Activated T-helper 1 cell treated with anti-CD3 and anti-CD28 coated beads, Interleukin-12 subunit alpha, Interleukin-12 subunit beta, Interleukin-2, Interleukin-4 antibody, amounts not matched to agents 30 ng/mL and 10 ng/mL and 1 ng/mL, durations not matched to agents 14 hours and 24 hours and 36 hours (primary cell): ENCODE measurements at regions of chr14 and their contacts with region 1.

Region 1: DNA sequence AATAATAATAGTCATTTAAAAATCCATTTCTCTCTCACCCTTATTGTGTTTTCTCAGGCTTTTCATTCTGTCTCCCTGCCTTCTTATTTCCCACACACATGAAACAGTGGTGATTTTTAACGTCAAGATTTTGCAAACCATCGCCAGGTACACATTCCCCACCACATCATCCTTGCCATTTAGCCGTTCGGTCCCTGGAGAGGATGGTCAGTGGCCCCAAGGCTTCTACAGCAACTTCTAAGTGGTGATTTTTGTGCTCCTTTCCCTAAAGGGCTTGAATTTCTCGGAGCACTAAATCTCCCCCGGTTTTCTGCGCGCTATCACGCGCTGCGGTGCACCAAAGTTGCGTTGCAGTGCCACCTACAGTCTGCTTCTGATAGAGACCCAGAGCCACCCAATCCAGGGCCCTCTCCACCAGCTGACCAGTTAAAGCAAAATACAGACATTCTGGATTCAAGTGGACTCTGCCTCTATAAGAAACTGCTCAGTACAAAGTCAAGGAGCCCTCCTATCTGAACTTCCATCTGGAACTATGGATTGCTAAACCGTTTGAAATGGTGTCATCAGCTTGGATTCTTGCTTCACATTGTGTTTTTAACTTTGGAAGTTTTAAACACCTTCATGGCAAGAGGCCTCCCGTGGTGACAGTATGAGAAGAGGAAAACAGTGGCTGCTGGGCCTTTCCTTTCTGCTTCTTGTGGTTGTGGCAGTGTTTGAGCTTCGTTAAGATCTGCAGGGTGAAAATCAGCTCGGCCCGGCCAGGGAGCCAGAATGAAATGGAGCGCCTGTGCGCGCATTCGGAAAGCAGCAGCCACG is 234.0 kb downstream of the SPTSSA start:
- DNase-seq: peak; percentile 45
- H3K4me3 Mint-ChIP-seq: peak overlapping the region; percentile 40
- H3K27ac Mint-ChIP-seq: no peak overlapping the region
- H3K4me1 Mint-ChIP-seq: peaks cover 16% of the 10 kb centered on the region
- H3K27me3 Mint-ChIP-seq: peaks cover 16% of the 10 kb centered on the region

Region 2: DNA sequence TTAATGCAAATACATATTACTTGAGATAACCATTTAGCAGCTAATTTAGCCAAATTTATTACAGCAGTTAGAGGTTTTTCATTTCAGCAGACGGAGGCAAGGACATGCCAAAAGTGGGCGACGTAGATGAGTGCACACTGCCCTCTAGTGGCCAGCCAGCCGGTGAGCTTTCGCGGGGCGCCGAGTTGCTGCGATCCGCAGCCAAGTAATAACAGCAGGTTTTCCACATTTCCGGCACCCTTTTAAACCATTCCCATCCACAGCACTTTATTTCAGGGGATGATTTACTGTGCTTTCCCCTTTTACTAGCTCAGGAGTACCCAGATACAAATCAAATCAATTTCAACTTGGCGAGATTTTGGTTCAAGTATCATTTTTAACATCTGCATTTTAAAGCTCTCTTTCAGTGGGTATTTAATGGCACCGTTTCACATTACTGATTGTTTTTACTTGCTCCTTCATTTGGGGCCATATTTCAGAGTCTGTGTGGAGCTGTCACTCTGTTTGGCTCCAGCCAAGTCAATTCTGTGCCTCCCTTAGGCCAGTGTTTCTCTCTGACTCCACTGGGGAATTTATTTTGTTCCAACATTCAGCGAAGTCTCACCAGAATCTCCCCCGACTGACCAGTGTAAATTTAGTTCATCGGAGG is 435.2 kb before region 1 on chr14:
- intact Hi-C with region 1: loop called (anchors 1 kb)
- DNase-seq: peak; percentile 46
- H3K4me3 Mint-ChIP-seq: peak overlapping the region; percentile 72
- H3K27ac Mint-ChIP-seq: no peak overlapping the region
- H3K4me1 Mint-ChIP-seq: peaks cover 24% of the 10 kb centered on the region
- H3K27me3 Mint-ChIP-seq: peaks cover 28% of the 10 kb centered on the region

Region 3: DNA sequence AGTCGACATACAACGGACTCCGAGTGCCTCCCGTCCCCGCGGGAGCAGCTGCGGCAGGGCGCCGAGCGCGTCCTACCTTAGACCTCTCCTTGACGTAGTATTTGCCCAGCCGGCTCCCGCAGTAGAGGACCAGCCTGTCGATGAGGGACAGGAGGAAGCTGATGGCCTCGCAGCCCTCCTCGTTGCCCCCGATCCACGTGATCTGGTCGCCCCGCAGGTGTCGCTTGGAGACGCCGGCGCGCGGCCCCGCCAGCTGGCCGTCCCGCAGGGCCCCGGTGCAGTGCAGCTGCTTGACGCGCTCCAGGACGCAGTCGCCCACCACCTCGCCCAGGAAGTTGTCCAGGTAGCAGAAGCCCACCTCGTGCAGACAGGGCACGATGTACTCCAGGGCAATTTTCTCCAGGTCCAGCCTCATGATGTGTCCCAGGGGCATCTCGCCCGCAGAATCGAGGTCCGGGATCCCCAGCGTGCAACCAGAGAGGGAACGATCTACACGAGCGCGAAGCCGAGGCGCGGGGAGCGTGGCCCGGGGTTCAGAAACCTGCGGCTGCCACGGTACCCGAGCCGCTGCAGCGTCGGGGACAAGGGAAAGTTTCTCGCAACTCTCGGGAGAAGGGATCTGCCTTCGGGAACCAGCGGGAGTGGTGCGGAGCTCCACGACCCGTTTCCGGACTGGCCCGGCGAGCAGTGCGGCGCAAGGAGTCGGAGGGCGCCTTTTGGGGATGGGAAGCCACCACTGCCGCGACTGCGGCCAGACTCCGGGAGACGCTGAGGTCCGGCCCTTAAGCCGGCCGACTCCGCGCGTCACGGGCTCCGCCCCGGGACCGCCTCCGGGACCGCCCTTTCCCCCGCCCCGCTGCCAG is 277.5 kb before region 1 on chr14 and contains the start of gene EGLN3:
- intact Hi-C with region 1: loop called (anchors 2 kb)
- DNase-seq: peak; percentile 79
- H3K4me3 Mint-ChIP-seq: peak within 1 kb of the TSS; percentile 80
- H3K27ac Mint-ChIP-seq: peak within 1 kb of the TSS; percentile 70
- H3K4me1 Mint-ChIP-seq: peaks cover 44% of the 10 kb centered on the region
- H3K27me3 Mint-ChIP-seq: peaks cover 43% of the 10 kb centered on the region
- total RNA-seq, gene EGLN3: 8.7 and 11.2 TPM in 2 replicates

Region 4: DNA sequence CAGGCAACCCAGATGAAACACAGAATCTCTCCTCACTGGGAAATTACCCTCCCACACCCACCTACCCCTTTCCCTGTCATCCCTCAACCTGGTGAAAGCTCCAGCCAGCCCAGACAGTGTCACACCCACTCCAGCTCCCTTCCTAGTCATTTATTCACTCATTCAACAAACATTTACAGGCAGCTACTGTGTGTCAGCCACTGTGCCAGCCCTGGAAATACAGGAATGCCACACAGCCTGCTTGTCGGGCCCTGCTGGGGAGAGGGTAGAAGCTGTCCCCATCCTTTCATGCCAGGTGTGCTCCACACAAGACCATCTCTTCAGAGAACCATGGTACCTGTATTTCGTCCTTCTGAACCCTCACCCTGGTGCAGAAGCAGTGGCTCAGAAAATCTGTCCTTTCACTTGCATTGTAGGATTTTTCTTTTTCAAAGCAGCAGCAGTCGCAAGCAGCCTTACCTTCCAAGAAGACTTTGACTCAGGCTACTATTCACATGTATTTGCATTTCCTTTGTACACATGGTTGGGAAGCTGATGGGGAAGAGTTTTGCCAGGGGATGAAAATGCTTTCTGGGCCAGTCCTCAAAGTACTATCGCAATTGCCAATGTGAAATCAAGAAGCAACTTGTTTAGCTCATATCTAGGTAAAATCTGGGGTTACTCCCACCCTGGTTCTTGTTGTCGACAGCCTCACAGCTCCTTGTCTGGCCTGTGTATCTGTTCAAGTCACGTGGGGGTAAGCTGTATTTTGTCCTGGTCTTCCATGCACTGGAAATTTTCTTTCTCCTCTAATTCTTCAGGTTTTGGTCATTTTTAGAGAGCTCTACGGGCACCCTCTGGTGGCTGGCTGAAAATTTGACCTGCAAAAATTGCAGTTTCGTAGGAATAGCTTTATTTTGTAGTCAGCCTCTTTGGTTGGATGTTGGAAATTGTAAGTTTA is 129.7 kb before region 1 on chr14:
- intact Hi-C with region 1: loop called (anchors 5 kb)
- DNase-seq: peak; percentile 21
- H3K4me3 Mint-ChIP-seq: no peak overlapping the region
- H3K27ac Mint-ChIP-seq: no peak overlapping the region
- H3K4me1 Mint-ChIP-seq: peaks cover 61% of the 10 kb centered on the region
- H3K27me3 Mint-ChIP-seq: peaks cover 3% of the 10 kb centered on the region